Activated naive CD8-positive, alpha-beta T cell treated with anti-CD3 and anti-CD28 coated beads, Interleukin-2, amount 10 ng/mL, durations not matched to agents 7 days and 5 days (primary cell): ENCODE measurements at regions of chr14 and their contacts with region 1.

Region 1: DNA sequence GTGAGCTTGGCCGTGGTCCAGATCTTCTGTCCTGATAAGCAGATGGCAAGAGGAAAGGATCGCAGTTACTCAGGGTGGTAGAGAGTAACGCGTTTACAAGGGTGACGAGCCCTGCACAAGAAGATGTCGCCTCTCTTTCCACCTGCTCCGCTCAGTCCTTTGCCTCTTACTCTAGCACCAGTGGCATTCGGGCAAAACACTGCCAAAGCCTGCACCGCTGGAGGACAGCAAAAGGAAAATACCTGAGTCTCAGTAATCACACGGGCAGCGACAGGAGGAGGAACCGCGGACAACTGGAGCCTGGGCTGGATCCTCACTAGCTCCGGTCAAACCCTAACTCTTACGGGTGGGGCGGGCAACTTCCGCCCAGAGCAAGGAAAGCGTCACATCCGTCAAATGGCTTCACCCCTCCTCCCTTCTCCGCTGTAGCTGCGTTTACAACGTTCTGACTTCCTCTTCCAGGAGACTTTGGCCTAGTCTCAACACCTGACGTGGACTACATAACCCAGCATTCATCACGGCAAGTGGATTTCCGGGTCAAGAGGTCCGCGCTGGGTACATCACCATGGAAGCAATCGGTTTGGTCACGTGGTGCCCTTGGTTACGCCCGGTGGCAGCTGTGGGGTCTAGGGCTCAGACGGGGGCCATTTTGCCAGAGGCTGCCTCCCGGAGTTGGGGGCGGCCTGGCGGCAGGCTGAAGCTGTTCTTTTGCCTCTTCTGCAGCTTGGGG is at the starts of genes KLHL28 and TOGARAM1:
- DNase-seq: peak; percentile 89
- ATAC-seq: peak; percentile 91
- H3K4me3 Mint-ChIP-seq: no peak within 1 kb of the TSS
- H3K27ac Mint-ChIP-seq: no peak within 1 kb of the TSS
- H3K4me1 Mint-ChIP-seq: peaks cover 41% of the 10 kb centered on the region
- H3K27me3 Mint-ChIP-seq: no peaks in the 10 kb centered on the region
- total RNA-seq, gene KLHL28: 19.6 to 22.4 TPM
- total RNA-seq, gene TOGARAM1: 11.4 to 11.9 TPM

Region 2: GRCh38 chr14:44897045-44897844 is 64.5 kb before region 1 on chr14:
- POLR2A ChIA-PET with region 1: interaction called, 14 read pairs
- DNase-seq: peak; percentile 86
- ATAC-seq: peak; percentile 98
- H3K4me3 Mint-ChIP-seq: peak overlapping the region; percentile 92
- H3K27ac Mint-ChIP-seq: peak overlapping the region; percentile 93
- H3K4me1 Mint-ChIP-seq: peaks cover 13% of the 10 kb centered on the region
- H3K27me3 Mint-ChIP-seq: no peaks in the 10 kb centered on the region

Region 3: GRCh38 chr14:45083971-45084722 is 122.4 kb after region 1 on chr14 and contains the start of gene PRPF39:
- POLR2A ChIA-PET with region 1: interaction called, 20 read pairs
- DNase-seq: peak; percentile 96
- ATAC-seq: peak; percentile 99
- H3K4me3 Mint-ChIP-seq: peak within 1 kb of the TSS; percentile 97
- H3K27ac Mint-ChIP-seq: peak within 1 kb of the TSS; percentile 96
- H3K4me1 Mint-ChIP-seq: peaks cover 35% of the 10 kb centered on the region
- H3K27me3 Mint-ChIP-seq: no peaks in the 10 kb centered on the region
- total RNA-seq, gene PRPF39: 54.8 to 56.8 TPM

Region 4: DNA sequence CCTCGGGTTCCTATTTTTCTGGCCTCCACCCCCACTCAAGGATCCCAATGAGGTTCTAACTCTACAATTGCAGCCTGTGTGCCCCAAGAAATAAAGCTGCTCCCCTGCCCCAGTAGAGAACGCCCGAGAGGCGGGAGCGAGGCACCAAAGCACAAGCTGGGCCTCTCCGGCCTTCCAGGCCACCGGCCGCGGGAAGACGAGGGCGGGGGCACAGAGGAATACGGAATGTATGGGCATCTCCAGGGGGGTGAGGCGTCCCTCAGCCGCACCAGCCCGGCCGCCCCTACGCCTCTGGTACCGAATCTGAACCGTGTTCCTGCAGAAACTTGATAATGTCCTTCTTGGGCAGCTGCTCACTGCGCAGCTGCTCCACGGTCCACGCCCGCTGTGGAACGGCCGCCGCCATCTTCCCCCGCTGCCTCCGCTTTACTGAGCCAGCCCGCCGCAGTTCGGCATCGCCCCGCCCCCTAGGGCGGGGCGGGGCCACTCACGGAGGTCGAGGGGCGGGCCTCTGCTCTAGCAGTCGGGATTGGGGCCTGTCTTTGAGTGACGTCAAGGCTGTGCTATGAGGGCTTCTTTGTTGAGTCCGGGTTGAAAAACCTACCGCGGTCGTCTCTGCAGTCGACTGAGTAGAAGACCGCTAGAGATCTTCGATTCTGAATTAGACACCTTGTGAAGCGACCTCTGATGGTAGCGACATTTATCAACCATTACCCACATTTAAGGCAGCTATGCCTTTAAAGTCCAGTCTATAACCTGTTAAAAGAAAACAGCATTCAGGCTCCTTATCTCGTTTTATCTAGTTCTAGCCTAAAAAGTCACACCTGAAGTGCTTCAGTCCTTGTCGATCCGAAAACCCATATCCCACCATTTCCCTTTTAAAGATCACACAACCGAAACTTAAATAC is 172.5 kb after region 1 on chr14 and contains the start of gene FKBP3:
- POLR2A ChIA-PET with region 1: interaction called, 38 read pairs
- DNase-seq: peak; percentile 88
- ATAC-seq: peak; percentile 95
- H3K4me3 Mint-ChIP-seq: peak within 1 kb of the TSS; percentile 100
- H3K27ac Mint-ChIP-seq: peak within 1 kb of the TSS; percentile 100
- H3K4me1 Mint-ChIP-seq: peaks cover 34% of the 10 kb centered on the region
- H3K27me3 Mint-ChIP-seq: no peaks in the 10 kb centered on the region
- total RNA-seq, gene FKBP3: 65.7 to 67.1 TPM

Region 5: GRCh38 chr14:45253068-45253753 is 291.4 kb after region 1 on chr14 and contains the start of gene MIS18BP1:
- POLR2A ChIA-PET with region 1: interaction called, 12 read pairs
- DNase-seq: peak; percentile 90
- ATAC-seq: peak; percentile 93
- H3K4me3 Mint-ChIP-seq: peak within 1 kb of the TSS; percentile 85
- H3K27ac Mint-ChIP-seq: peak within 1 kb of the TSS; percentile 95
- H3K4me1 Mint-ChIP-seq: peaks cover 14% of the 10 kb centered on the region
- H3K27me3 Mint-ChIP-seq: no peaks in the 10 kb centered on the region
- total RNA-seq, gene MIS18BP1: 52.0 to 57.2 TPM